ENCODE measurements at regions of chr11 and their contacts with region 1.

Region 1: DNA sequence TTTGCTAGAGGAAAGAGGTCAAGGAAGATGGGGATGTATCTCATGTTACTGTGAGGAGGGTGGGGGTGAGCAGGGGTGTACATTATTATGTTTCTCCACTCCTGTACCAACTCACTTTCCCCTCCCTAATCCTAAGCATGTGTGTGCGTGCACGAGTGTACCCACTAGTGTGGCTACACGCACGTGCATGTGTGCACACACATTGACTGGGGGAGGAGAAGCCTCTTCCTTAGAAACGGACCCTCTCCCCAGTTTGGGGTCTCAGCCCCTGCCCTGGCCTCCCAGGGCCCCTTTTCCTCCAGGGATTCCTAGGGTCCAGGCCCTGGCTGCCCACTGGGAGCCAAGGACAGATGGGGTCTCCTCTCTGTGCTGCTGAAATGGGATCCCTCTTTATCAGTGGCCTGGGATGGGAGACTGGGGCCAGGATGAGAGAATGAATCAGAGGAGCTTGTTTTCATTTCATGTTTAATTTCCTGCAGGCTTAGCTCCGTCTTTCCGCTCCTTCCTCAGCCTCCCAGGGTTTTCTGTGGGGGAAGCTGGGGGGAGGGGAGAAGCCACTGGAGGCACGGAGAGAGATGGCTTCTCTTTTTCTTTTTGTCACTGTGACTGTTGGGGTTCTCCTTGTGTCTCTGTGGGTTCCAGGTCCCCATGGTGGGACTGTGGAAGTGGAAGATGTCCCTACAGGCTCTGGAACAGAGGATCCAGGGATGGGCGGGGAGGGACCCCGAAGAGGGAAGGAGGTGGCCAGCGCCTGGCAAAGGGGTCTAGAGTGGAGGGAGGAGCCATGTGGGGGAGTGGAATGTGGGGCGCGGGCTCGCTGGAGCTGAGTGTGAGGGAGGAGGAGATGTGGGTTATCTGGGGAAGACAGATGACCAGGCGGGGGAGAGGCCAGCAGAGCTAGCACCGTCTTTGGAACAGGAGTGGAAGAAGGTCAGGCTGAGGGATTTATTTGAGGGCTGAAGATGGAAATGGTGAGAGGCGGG is 40.3 kb downstream of the ALX4 start:
- DNase-seq: no peak
- H3K4me3 ChIP-seq: no peak overlapping the region
- H3K27ac ChIP-seq: no peak overlapping the region
- H3K4me1 ChIP-seq: no peaks in the 10 kb centered on the region
- H3K27me3 ChIP-seq: peaks cover 91% of the 10 kb centered on the region
- CTCF ChIP-seq: no peak

Region 2: GRCh38 chr11:44256673-44257291 is 12.9 kb before region 1 on chr11:
- CTCF ChIA-PET with region 1: no interaction called
- POLR2A ChIA-PET with region 1: no interaction called
- intact Hi-C with region 1: no loop called
- DNase-seq: no peak
- H3K4me3 ChIP-seq: no peak overlapping the region
- H3K27ac ChIP-seq: no peak overlapping the region
- H3K4me1 ChIP-seq: no peaks in the 10 kb centered on the region
- H3K27me3 ChIP-seq: no peaks in the 10 kb centered on the region
- CTCF ChIP-seq: no peak

Region 3: DNA sequence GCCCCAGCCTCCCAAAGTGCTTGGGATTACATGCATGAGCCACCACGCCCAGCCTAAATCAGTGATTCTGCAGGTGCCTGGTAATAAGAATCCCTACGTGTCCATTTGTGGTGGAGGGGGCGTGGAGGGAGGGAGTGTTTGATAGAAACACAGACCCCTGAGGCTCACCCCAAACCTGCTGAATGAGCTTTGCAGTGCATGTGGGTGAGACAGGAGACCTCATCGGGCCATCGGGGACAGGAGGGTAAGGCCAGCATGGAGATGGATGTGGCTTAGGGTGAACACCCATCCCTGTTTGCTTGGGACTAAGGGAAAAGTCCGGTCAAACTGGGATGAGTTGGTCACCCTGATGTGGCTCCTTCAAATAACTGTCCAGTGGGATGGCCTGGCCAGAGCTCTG is 111.6 kb after region 1 on chr11:
- CTCF ChIA-PET with region 1: interaction called, 12 read pairs
- POLR2A ChIA-PET with region 1: no interaction called
- intact Hi-C with region 1: no loop called
- DNase-seq: peak in 1 of 2 experiments; percentile 33
- H3K4me3 ChIP-seq: no peak overlapping the region
- H3K27ac ChIP-seq: no peak overlapping the region
- H3K4me1 ChIP-seq: no peaks in the 10 kb centered on the region
- H3K27me3 ChIP-seq: peaks cover 40% of the 10 kb centered on the region
- CTCF ChIP-seq: no peak

Measured in PC-9 (cell line).